Endothelial cell of umbilical vein (primary cell): ENCODE measurements at regions of chr1 and their contacts with region 1.

Region 1: GRCh38 chr1:214404154-214404553 is 123.2 kb downstream of the SMYD2 start:
- DNase-seq: peak; percentile 90
- H3K4me3 ChIP-seq: peak overlapping the region in 1 of 3 experiments; percentile 39
- H3K27ac ChIP-seq: peak overlapping the region; percentile 99
- H3K4me1 ChIP-seq: peaks cover 35% of the 10 kb centered on the region
- H3K27me3 ChIP-seq: no peaks in the 10 kb centered on the region
- CTCF ChIP-seq: no peak
- POLR2A ChIP-seq: peak; percentile 53

Region 2: GRCh38 chr1:214198571-214198970 is 205.6 kb before region 1 on chr1:
- CTCF ChIA-PET with region 1: no interaction called
- POLR2A ChIA-PET with region 1: no interaction called
- dilution Hi-C with region 1: no loop called
- intact Hi-C with region 1: no loop called
- DNase-seq: no peak
- H3K4me3 ChIP-seq: no peak overlapping the region
- H3K27ac ChIP-seq: no peak overlapping the region
- H3K4me1 ChIP-seq: no peaks in the 10 kb centered on the region
- H3K27me3 ChIP-seq: peaks cover 7 to 21% of the 10 kb centered on the region in 2 experiments
- CTCF ChIP-seq: no peak
- POLR2A ChIP-seq: no peak

Region 3: DNA sequence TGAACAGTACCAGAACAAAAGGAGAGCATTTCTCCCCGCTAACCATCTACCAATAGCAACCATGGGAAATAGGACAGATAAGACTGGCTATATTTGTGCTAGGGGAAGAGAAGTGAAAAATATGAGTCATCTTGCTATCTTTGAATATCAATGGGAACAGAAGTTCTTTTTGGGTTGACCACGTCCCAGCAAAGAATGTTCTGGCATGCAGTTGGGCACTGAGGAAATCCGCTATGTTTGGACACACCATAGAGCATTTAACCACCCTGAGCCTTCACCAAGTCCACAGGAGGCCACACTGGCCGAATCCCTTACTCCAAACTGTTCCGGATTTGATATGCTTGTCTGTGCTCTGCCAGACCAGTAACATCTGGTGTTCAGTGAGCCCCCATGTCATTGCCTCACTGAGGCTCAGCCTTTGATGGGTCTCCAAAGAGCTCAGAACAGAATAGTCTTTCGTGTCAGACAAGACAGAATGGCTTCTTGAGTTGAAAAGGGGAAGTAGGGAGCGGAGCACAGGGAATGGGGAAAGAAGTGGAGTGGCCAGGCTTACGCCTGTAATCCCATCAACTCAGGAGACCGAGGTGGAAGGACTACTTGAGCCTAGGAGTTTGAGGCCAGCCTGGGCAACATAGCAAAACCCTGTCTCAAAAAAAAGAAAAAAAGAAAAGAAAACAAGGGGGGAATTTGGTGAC is 41.8 kb before region 1 on chr1:
- CTCF ChIA-PET with region 1: no interaction called
- POLR2A ChIA-PET with region 1: interaction called, 3 read pairs
- dilution Hi-C with region 1: no loop called
- intact Hi-C with region 1: loop called (anchors 2 kb)
- DNase-seq: peak; percentile 52
- H3K4me3 ChIP-seq: no peak overlapping the region
- H3K27ac ChIP-seq: peak overlapping the region; percentile 3
- H3K4me1 ChIP-seq: peaks cover 8% of the 10 kb centered on the region
- H3K27me3 ChIP-seq: no peaks in the 10 kb centered on the region
- CTCF ChIP-seq: no peak
- POLR2A ChIP-seq: no peak

Region 4: GRCh38 chr1:214416417-214416816 is 12.3 kb after region 1 on chr1:
- CTCF ChIA-PET with region 1: interaction called, 19 read pairs
- POLR2A ChIA-PET with region 1: interaction called, 6 read pairs
- dilution Hi-C with region 1: no loop called
- intact Hi-C with region 1: no loop called
- DNase-seq: peak; percentile 75
- H3K4me3 ChIP-seq: no peak overlapping the region
- H3K27ac ChIP-seq: peak overlapping the region; percentile 28
- H3K4me1 ChIP-seq: peaks cover 49% of the 10 kb centered on the region
- H3K27me3 ChIP-seq: no peaks in the 10 kb centered on the region
- CTCF ChIP-seq: no peak
- POLR2A ChIP-seq: no peak

Region 5: DNA sequence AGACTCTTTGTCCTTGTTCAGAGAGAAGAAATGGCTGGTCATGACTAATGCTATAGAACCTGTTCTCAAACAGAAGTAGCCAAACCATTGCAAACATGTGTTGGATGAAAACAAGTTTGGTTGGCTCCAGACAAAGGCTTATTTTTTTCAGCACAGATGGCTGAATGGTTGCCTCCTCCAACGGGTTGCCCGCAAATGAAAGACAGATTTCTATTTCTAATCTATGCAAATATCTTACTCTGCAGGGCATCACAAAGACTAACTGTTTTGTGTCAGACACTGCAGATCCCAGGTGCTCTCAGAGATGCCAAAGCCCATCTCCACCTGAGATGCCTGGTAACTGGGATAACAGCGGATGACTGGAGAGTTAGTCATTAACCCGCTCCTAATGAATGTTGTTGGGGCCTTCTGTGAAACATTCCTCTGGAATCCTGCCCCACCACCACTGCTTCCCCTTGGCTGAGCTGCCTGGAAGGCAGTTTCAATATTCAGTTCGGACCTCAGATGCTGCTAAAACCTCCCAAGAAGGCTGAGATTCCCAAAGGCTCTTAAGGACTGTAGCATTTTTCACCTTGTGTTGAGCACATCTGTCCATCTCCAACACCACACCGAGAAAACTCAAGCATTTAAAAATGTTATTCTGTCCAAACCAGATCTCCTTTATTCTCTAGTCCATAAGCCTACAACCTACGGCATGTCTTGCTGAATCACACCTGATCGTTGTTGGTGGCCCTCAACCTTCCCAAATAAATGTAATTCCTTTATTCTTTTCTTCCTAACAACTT is 42.8 kb after region 1 on chr1:
- CTCF ChIA-PET with region 1: interaction called, 10 read pairs
- POLR2A ChIA-PET with region 1: no interaction called
- dilution Hi-C with region 1: no loop called
- intact Hi-C with region 1: loop called (anchors 1 kb)
- DNase-seq: peak; percentile 88
- H3K4me3 ChIP-seq: peak overlapping the region in 1 of 3 experiments; percentile 33
- H3K27ac ChIP-seq: peak overlapping the region; percentile 88
- H3K4me1 ChIP-seq: peaks cover 41% of the 10 kb centered on the region
- H3K27me3 ChIP-seq: no peaks in the 10 kb centered on the region
- CTCF ChIP-seq: no peak
- POLR2A ChIP-seq: peak; percentile 56

Region 6: GRCh38 chr1:214476958-214477870 is 73.1 kb after region 1 on chr1:
- CTCF ChIA-PET with region 1: no interaction called
- POLR2A ChIA-PET with region 1: no interaction called
- dilution Hi-C with region 1: no loop called
- intact Hi-C with region 1: loop called (anchors 2 kb)
- DNase-seq: peak; percentile 75
- H3K4me3 ChIP-seq: peak overlapping the region in 1 of 3 experiments; percentile 15
- H3K27ac ChIP-seq: peak overlapping the region; percentile 70
- H3K4me1 ChIP-seq: peaks cover 28% of the 10 kb centered on the region
- H3K27me3 ChIP-seq: no peaks in the 10 kb centered on the region
- CTCF ChIP-seq: no peak
- POLR2A ChIP-seq: no peak

Region 7: GRCh38 chr1:215005078-215005477 is 600.9 kb after region 1 on chr1:
- CTCF ChIA-PET with region 1: no interaction called
- POLR2A ChIA-PET with region 1: no interaction called
- dilution Hi-C with region 1: no loop called
- intact Hi-C with region 1: no loop called
- DNase-seq: no peak
- H3K4me3 ChIP-seq: no peak overlapping the region
- H3K27ac ChIP-seq: no peak overlapping the region
- H3K4me1 ChIP-seq: no peaks in the 10 kb centered on the region
- H3K27me3 ChIP-seq: no peaks in the 10 kb centered on the region
- CTCF ChIP-seq: no peak
- POLR2A ChIP-seq: no peak